Activated B cell treated with CpG ODN at 0.5 μM for 24 hours (primary cell): ENCODE measurements at regions of chr11 and their contacts with region 1.

Region 1: DNA sequence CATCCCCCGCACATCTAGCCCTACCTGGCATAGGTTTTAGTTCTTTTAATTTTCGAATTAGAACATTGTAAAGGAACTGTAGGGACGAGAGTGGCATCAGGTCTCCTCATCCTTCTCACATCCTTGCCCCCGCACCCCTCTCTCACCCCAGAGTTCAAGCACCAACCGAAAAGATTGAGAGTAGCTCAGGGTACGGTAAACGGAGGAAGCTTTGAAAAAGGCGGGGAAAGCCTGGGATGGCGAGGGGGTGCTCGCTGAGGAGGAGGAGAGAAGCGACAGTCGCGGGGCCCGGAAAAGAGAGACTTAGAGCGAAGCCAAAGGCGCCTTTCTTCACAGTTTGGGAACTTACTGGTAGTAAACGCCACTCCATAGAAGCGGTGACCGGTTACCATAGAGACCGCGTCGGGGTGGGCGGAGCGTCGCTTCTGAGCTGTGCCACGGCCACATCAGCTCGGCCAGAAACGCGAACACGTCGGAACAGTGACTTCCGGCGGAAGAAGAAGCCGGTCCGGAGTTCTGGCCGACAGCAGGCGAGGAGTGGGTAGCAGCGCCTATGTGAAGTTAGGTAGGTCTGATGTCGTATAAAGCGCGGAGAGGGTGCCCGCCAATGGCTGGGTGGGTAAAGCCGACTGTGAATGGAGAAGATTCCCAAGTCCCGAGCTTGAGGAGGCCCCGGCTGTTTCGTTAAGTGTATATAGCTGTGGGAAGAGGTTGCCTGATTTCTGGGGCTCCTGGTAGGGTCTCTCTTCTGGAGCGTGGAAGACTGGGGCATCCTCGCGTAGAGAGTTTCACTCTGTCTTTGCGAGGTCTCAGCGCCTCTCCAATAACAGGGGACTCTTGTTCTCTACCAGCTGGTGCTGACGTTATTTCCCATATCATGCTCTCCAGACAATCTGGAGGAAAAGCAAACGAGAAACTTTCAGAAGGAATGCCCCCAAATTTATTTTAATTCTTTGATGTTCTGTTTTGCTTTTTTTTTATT is at the starts of genes DCDC1 and DNAJC24:
- DNase-seq: peak; percentile 86
- ATAC-seq: peak; percentile 98
- H3K4me3 Mint-ChIP-seq: peak within 1 kb of the TSS; percentile 97
- H3K27ac Mint-ChIP-seq: peak within 1 kb of the TSS; percentile 93
- H3K4me1 Mint-ChIP-seq: peaks cover 33% of the 10 kb centered on the region
- H3K27me3 Mint-ChIP-seq: peaks cover 12% of the 10 kb centered on the region
- CTCF ChIP-seq: no peak
- total RNA-seq, gene DCDC1: not detected in 2 replicates
- total RNA-seq, gene DNAJC24: 21.2 and 26.3 TPM in 2 replicates

Region 2: GRCh38 chr11:31355131-31355530 is 14.5 kb before region 1 on chr11:
- CTCF ChIA-PET with region 1: no interaction called
- POLR2A ChIA-PET with region 1: no interaction called
- intact Hi-C with region 1: no loop called
- DNase-seq: no peak
- ATAC-seq: no peak
- H3K4me3 Mint-ChIP-seq: no peak overlapping the region
- H3K27ac Mint-ChIP-seq: no peak overlapping the region
- H3K4me1 Mint-ChIP-seq: no peaks in the 10 kb centered on the region
- H3K27me3 Mint-ChIP-seq: peaks cover 15% of the 10 kb centered on the region
- CTCF ChIP-seq: no peak

Region 3: GRCh38 chr11:31477528-31478222 is 108.0 kb after region 1 on chr11:
- CTCF ChIA-PET with region 1: no interaction called
- POLR2A ChIA-PET with region 1: no interaction called
- intact Hi-C with region 1: no loop called
- DNase-seq: no peak
- ATAC-seq: no peak
- H3K4me3 Mint-ChIP-seq: no peak overlapping the region
- H3K27ac Mint-ChIP-seq: no peak overlapping the region
- H3K4me1 Mint-ChIP-seq: no peaks in the 10 kb centered on the region
- H3K27me3 Mint-ChIP-seq: no peaks in the 10 kb centered on the region
- CTCF ChIP-seq: no peak

Region 4: GRCh38 chr11:31509429-31510345 is 140.0 kb after region 1 on chr11 and contains the starts of genes ELP4 and IMMP1L:
- CTCF ChIA-PET with region 1: no interaction called
- POLR2A ChIA-PET with region 1: no interaction called
- intact Hi-C with region 1: loop called (anchors 1 kb)
- DNase-seq: peak; percentile 84
- ATAC-seq: peak; percentile 99
- H3K4me3 Mint-ChIP-seq: peak within 1 kb of the TSS; percentile 98
- H3K27ac Mint-ChIP-seq: peak within 1 kb of the TSS; percentile 95
- H3K4me1 Mint-ChIP-seq: peaks cover 37% of the 10 kb centered on the region
- H3K27me3 Mint-ChIP-seq: no peaks in the 10 kb centered on the region
- CTCF ChIP-seq: no peak
- total RNA-seq, gene ELP4: 20.4 and 25.5 TPM in 2 replicates
- total RNA-seq, gene IMMP1L: 16.6 and 17.9 TPM in 2 replicates

Region 5: GRCh38 chr11:31810779-31811647 is 441.4 kb after region 1 on chr11 and contains the start of gene PAX6:
- CTCF ChIA-PET with region 1: no interaction called
- POLR2A ChIA-PET with region 1: no interaction called
- intact Hi-C with region 1: loop called (anchors 10 kb)
- DNase-seq: no peak
- ATAC-seq: peak; percentile 66
- H3K4me3 Mint-ChIP-seq: peak within 1 kb of the TSS; percentile 74
- H3K27ac Mint-ChIP-seq: peak within 1 kb of the TSS; percentile 54
- H3K4me1 Mint-ChIP-seq: peaks cover 45% of the 10 kb centered on the region
- H3K27me3 Mint-ChIP-seq: peaks cover 67% of the 10 kb centered on the region
- CTCF ChIP-seq: no peak
- total RNA-seq, gene PAX6: not detected in 2 replicates

Region 6: DNA sequence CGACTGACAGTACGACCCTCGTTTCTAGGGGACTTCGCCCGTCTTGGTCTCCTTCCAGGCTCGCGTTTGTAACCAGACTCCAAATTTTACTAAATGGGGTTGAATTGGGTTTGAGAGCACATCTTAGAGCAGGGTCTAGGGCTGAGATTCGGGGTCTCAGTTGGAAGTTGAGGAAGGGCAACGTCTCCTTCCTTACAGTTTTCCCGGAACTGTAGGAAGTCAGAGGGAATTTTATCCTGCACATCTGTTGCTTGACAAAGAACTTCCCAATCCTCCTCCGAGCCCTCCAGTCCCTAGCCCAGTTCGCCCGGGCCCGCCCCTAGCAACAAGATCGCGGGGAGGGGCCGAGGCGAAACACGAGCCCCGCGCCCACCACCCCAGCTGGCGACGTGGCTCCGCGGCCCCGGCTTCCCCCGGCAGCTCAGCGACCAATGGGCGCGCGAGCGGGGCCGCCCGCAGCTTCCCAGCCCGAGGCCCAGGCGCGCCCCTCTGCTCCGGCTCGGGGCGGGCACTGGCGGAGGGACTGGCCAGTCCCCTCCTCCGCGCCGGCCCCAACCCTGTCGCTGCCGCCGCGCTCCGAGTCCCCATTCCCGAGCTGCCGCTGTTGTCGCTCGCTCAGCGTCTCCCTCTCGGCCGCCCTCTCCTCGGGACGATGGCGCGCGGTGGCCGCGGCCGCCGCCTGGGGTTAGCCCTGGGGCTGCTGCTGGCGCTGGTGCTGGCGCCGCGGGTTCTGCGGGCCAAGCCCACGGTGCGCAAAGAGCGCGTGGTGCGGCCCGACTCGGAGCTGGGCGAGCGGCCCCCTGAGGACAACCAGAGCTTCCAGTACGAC is 721.1 kb after region 1 on chr11 and contains the start of gene RCN1:
- CTCF ChIA-PET with region 1: no interaction called
- POLR2A ChIA-PET with region 1: interaction called, 3 read pairs
- intact Hi-C with region 1: loop called (anchors 2 kb)
- DNase-seq: peak; percentile 50
- ATAC-seq: peak; percentile 66
- H3K4me3 Mint-ChIP-seq: peak within 1 kb of the TSS; percentile 86
- H3K27ac Mint-ChIP-seq: peak within 1 kb of the TSS; percentile 81
- H3K4me1 Mint-ChIP-seq: peaks cover 18% of the 10 kb centered on the region
- H3K27me3 Mint-ChIP-seq: peaks cover 9% of the 10 kb centered on the region
- CTCF ChIP-seq: no peak
- total RNA-seq, gene RCN1: 14.5 and 15.8 TPM in 2 replicates